Heart right ventricle (tissue), 16 donors: ENCODE measurements at regions of chr22 and their contacts with region 1.

Region 1: DNA sequence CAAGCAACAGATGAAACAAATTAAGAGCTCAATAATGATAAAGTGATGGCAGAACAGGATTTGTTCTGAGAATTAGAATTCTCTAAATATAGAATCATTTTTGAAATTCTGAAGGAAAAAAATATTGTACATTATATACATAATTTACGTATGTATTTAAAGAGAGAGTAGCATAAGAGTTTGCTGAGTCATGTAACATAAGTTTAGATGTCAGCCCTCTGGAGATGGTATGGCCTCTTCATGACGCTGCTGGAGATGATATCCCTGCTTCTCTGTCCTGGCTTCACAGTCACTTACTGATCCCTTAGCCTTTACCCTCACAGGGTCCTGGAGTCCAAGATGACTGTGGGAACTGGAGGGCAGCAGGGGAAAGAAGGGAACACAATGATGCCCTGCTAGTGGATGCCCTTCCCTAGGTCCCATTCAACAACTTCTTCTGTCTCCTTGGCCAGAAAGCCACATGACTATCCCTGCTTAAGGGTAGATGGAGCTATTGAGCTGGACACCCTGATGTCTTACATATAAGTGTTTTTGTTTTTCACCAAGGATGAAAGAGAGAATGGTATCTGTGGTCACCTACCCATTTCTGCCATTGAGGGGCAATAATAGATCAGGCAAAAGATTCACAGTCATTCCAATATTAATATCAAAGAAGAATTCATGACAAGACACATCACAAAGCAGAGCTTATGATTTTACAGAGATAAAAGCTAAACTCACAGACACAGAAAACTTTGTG is 753.1 kb downstream of the TBC1D22A start:
- DNase-seq: no peak
- ATAC-seq: no peak
- H3K4me3 ChIP-seq: no peak overlapping the region
- H3K27ac ChIP-seq: no peak overlapping the region
- H3K4me1 ChIP-seq: no peaks in the 10 kb centered on the region
- H3K27me3 ChIP-seq: peaks cover 0 to 18% (median 12%) of the 10 kb centered on the region in 7 donors
- CTCF ChIP-seq: peak in 2 of 9 donors; percentile 9 to 12

Region 2: GRCh38 chr22:47452184-47452583 is 63.4 kb before region 1 on chr22:
- intact Hi-C with region 1: loop called in 1 of 10 experiments (anchors 10 kb)
- DNase-seq: no peak
- ATAC-seq: no peak
- H3K4me3 ChIP-seq: no peak overlapping the region
- H3K27ac ChIP-seq: no peak overlapping the region
- H3K4me1 ChIP-seq: peaks cover 0 to 7% (median 0%) of the 10 kb centered on the region in 9 donors
- H3K27me3 ChIP-seq: peaks cover 0 to 25% (median 0%) of the 10 kb centered on the region in 7 donors
- CTCF ChIP-seq: peak in 6 of 9 donors; percentile 12 to 36 (median 30)